Cardiac septum (tissue), 1 donor: ENCODE measurements at regions of chr19 and their contacts with region 1.

Region 1: GRCh38 chr19:4638828-4639530 is at the start of gene TNFAIP8L1:
- DNase-seq: peak; percentile 98
- total RNA-seq, gene TNFAIP8L1: 3.6 TPM

Region 2: GRCh38 chr19:4267101-4267900 is 371.7 kb before region 1 on chr19:
- intact Hi-C with region 1: loop called (anchors 5 kb)
- DNase-seq: no peak

Region 3: GRCh38 chr19:4524808-4525562 is 114.0 kb before region 1 on chr19:
- intact Hi-C with region 1: no loop called
- DNase-seq: no peak

Region 4: GRCh38 chr19:4557971-4558941 is 80.7 kb before region 1 on chr19:
- intact Hi-C with region 1: loop called (anchors 5 kb)
- DNase-seq: no peak

Region 5: GRCh38 chr19:4575267-4576015 is 63.5 kb before region 1 on chr19:
- intact Hi-C with region 1: loop called (anchors 2 kb)
- DNase-seq: peak; percentile 85

Region 6: GRCh38 chr19:4606921-4607678 is 31.9 kb before region 1 on chr19:
- intact Hi-C with region 1: no loop called
- DNase-seq: peak; percentile 80

Region 7: DNA sequence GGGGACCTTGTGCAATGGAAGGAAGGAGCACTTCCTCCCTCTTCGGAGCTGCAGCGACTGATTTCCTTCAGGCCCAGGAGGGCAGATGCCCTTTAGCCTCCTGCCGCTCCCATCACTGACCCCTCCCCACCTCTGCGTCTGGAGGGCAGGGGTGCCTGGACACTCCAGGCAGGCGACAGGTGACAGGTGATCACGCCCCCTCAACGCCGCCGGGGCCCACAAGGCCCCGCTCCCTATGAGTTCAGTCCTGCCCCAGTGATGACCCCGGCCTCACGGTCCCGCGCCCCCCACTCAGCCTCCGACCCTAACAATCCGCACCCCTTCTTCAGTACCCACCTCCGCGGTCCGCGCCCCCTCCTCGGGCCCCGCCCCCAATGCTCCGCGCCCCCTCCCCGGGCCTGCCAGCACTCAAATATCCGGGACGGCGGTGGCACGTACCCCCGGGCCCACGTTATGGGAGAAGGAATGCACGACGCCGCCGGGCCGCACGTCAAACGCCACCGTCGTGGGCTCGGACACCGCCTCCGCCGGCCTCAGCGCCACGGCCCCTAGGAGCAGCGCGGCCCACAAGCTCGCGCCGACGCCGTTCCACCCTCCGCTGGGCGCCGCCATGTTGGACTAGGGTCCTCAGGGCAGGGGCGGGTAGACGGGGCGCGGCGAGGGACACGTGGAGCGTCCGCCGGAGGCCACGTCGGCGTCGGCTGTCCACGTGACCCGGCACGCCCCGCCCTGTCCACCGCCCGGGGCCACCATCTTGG is 30.9 kb after region 1 on chr19 and contains the start of gene MYDGF:
- intact Hi-C with region 1: no loop called
- DNase-seq: peak; percentile 96
- total RNA-seq, gene MYDGF: 37.1 TPM

Region 8: GRCh38 chr19:4713384-4713951 is 74.5 kb after region 1 on chr19:
- intact Hi-C with region 1: loop called (anchors 2 kb)
- DNase-seq: peak; percentile 92

Region 9: DNA sequence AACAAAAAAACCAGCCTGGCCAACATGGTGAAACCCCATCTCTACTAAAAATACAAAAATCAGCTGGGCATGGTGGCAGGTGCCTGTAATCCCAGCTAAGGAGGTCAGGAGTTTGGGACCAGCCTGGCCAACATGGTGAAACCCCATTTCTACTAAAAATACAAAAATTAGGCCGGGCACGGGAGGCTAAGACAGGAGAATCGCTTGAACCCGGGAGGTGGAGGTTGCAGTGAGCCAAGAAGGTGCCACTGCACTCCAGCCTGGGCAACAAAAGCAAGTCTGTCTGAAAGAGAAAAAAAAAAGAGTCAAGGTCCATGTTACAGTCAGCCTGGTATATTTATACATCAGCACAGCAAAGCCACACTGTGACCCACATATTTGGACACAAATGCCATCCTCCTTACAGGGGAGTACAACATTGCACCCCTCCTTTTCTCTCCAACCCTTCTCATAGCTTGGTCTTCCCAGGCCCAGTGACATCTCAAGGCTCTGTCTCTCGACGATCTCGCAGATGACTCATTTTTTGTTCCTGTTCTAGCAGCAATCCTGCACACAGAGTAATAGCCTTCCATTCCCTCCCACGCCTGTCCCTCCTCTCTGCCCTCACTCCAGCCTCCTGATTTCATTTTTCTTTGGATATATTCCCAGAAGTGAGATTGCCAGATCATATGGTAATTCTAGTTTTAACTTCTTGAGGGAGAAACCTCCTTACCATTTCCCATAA is 105.6 kb after region 1 on chr19:
- intact Hi-C with region 1: no loop called
- DNase-seq: no peak